ENCODE measurements at regions of chr2 and their contacts with region 1.

Region 1: DNA sequence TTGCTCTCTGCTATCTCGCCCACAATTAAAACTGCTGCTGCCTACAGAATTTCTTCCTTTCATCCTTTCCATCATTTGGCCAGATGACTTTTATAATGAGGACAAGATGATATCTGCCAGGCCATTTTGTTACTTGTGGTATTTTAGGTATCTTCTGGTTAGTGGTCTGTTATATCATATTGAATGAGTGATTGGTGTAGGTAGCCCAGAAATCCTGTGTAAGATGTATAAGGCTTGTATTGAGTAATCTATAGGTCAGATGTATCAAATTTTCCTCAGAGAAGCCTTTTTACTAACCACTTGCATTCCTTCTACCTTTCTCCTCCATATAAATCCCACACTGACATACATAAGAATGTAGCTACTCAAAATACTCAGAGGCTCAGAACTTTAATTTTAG is 118.3 kb downstream of the UBR3 start:
- H3K4me3 Mint-ChIP-seq: no peak overlapping the region
- H3K27ac Mint-ChIP-seq: no peak overlapping the region
- H3K4me1 Mint-ChIP-seq: no peaks in the 10 kb centered on the region
- H3K27me3 Mint-ChIP-seq: no peaks in the 10 kb centered on the region

Region 2: DNA sequence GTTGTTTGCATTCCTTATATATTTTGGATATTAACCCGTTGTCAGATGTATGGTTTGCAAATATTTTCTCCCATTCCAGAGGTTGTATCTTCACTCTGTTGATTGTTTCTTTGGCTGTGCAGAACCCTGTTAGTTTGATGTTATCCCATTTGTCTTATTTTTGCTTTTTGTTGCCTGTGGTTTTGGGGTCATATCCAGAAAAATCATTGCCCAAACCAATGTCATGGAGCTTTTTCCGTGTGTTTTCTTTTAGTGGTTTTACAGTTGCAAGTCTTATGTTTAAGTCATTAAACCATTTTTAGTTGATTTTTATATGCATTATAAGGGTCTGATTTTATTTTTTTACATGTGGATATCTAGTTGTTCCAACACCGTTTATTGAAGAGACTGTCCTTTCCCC is 325.6 kb before region 1 on chr2:
- intact Hi-C with region 1: loop called (anchors 10 kb)
- H3K4me3 Mint-ChIP-seq: no peak overlapping the region
- H3K27ac Mint-ChIP-seq: no peak overlapping the region
- H3K4me1 Mint-ChIP-seq: peaks cover 8% of the 10 kb centered on the region
- H3K27me3 Mint-ChIP-seq: no peaks in the 10 kb centered on the region